ENCODE measurements at regions of chr4 and their contacts with region 1.

Region 1: GRCh38 chr4:142703694-142704309 is 142.3 kb downstream of the INPP4B start:
- DNase-seq: no peak
- H3K4me3 ChIP-seq: no peak overlapping the region
- H3K27ac ChIP-seq: no peak overlapping the region
- H3K4me1 ChIP-seq: no peaks in the 10 kb centered on the region; a peak in 1 of 7 replicates
- H3K27me3 ChIP-seq: 0 out of 7 replicates have a peak, but pooled peaks cover 0 to 7% (median 0%) of the 10 kb centered on the region in 4 experiments
- CTCF ChIP-seq: no peak
- EP300 ChIP-seq: no peak
- POLR2A ChIP-seq: no peak
- RAD21 ChIP-seq: no peak

Region 2: DNA sequence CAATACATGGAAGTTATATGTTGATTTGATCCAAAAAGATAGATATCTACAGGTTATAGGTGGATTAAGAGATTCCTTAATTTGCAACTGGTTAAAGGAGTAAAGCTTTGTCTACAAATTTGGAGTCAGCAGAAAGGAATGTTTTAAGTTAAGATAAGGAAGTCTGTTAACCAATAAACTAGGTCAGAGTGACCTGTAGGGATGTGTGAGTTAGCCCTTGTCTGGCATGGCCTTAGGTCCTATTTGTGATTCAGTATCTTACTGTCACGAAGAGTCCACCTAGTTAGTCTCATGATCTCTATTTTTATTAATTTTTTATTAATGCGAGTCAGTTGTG is 88.5 kb before region 1 on chr4:
- CTCF ChIA-PET with region 1: no interaction called
- POLR2A ChIA-PET with region 1: no interaction called
- DNase-seq: no peak
- H3K4me3 ChIP-seq: no peak overlapping the region
- H3K27ac ChIP-seq: no peak overlapping the region
- H3K4me1 ChIP-seq: no peaks in the 10 kb centered on the region
- H3K27me3 ChIP-seq: no peaks in the 10 kb centered on the region
- CTCF ChIP-seq: no peak
- EP300 ChIP-seq: no peak
- POLR2A ChIP-seq: no peak
- RAD21 ChIP-seq: no peak

Region 3: DNA sequence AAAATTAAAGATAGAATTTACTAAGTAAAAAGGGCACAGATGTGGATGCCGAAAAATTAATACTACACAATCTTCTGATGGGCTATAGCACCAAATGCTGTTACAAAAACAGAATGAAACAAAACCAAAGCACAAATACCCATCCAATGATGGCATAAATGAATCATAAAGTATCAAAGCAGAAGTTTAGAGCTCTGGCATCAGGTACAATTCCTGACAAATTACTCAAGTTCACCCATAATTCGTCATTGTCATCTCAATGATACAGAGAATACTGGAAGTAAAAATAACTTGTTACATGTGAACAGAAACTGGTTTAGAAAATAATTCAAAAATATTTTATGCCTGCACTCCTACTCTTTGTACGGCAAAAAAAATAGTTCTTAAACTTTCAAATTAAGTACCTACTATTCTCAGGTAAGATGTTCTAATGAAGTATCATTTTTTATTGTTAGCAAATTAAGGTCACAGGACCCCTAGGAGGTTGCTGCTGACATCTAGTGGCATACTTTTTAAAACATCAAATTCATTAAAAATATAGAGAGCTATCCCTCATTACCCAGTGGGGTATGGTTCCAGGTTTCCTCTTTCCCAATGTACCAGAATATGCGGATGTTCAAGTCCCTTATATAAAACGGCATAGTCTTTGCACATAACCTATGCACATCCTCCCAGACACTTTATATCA is 16.2 kb after region 1 on chr4:
- CTCF ChIA-PET with region 1: interaction called, 13 read pairs
- POLR2A ChIA-PET with region 1: no interaction called
- DNase-seq: no peak
- H3K4me3 ChIP-seq: no peak overlapping the region
- H3K27ac ChIP-seq: no peak overlapping the region
- H3K4me1 ChIP-seq: no peaks in the 10 kb centered on the region
- H3K27me3 ChIP-seq: peaks cover 12 to 18% (median 17%) of the 10 kb centered on the region in 4 experiments
- CTCF ChIP-seq: peak in 2 of 3 experiments; percentile 23 to 24; a peak in 2 of 4 replicates
- EP300 ChIP-seq: no peak
- POLR2A ChIP-seq: no peak
- RAD21 ChIP-seq: peak; percentile 57 to 61

Region 4: DNA sequence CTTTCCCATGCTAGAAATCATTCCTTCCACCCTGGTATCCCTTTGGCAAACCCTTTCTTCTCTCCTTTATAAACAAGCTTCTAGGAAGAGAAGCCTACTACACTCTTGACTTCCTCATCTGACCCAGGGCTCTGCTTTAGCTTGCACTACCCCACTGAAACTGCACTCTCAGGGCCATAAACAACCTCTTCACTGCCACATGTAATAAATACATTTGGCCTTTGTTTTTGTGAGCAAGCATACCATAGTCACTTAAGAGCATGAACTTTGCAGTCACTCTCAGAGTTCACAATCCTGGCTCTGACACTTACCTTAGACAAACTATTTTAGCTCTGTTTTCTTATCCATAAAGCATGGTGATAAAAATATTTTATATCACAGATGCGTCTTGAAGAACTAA is 430.2 kb after region 1 on chr4:
- CTCF ChIA-PET with region 1: no interaction called
- POLR2A ChIA-PET with region 1: no interaction called
- DNase-seq: no peak
- H3K4me3 ChIP-seq: no peak overlapping the region
- H3K27ac ChIP-seq: no peak overlapping the region
- H3K4me1 ChIP-seq: no peaks in the 10 kb centered on the region
- H3K27me3 ChIP-seq: no peaks in the 10 kb centered on the region
- CTCF ChIP-seq: no peak
- EP300 ChIP-seq: no peak
- POLR2A ChIP-seq: no peak
- RAD21 ChIP-seq: no peak

Measured in H1 (cell line).